Activated B cell treated with CpG ODN at 0.5 μM for 24 hours (primary cell): ENCODE measurements at regions of chr2 and their contacts with region 1.

Region 1: DNA sequence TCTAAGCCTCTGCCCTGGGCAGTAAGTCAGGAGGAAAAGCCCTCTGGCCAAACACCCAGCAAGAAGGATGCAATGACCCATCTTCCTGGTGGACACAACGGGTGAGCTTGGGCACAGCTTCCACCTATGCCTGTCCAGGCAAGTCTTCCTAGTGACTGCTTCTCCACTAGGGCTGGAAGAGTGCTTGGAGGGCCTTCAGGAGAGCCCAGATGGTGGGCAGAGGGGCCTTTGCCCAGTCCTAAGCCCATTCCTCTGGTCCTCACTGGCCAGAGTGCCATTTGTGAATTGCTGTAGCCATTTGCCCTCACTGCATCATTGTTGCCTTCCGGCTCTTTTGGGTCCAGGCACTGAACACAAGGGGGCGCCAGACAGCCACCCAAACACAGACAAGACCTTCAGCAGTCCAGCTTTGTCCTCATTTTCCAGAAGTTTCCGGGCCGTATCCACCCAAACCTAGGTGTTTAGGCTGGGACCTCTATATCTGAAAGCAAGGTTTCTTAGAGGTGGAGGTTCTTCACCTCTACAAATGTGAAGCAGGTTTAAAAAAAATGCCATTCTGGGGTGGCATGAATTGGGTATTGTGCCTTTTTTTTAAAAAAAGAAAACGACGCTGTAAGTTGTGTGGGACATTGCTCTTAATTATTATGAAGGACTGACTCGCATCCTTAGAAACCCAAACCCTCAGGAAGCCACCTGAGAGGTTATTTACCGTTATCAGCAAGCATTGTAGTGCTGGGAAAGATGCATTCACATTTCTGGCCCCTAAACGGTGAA is 29.5 kb downstream of the PAX8 start:
- DNase-seq: peak; percentile 64
- ATAC-seq: peak; percentile 86
- H3K4me3 Mint-ChIP-seq: no peak overlapping the region
- H3K27ac Mint-ChIP-seq: no peak overlapping the region
- H3K4me1 Mint-ChIP-seq: peaks cover 11% of the 10 kb centered on the region
- H3K27me3 Mint-ChIP-seq: peaks cover 2% of the 10 kb centered on the region
- CTCF ChIP-seq: peak; percentile 92

Region 2: DNA sequence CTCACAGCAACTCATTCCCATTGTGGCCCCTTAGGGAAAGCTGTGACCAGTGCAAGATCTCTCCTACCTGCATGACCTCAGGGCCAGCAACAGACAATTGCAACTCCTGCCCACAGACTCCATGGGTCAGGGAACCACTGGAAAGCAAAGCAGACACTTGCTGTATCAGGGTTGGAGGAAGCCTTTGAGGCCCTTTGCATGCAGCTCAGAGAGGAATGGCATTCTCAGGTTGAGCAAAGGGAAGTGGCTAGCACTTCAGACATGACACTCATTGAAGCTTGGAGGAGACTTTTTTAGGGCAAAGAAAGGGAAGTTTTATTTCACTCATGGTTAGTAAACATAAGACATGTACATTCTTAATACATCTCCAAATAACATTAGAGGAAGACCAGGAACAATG is 159.3 kb before region 1 on chr2:
- CTCF ChIA-PET with region 1: no interaction called
- POLR2A ChIA-PET with region 1: no interaction called
- intact Hi-C with region 1: no loop called
- DNase-seq: no peak
- ATAC-seq: no peak
- H3K4me3 Mint-ChIP-seq: no peak overlapping the region
- H3K27ac Mint-ChIP-seq: no peak overlapping the region
- H3K4me1 Mint-ChIP-seq: no peaks in the 10 kb centered on the region
- H3K27me3 Mint-ChIP-seq: peaks cover 8% of the 10 kb centered on the region
- CTCF ChIP-seq: no peak

Region 3: DNA sequence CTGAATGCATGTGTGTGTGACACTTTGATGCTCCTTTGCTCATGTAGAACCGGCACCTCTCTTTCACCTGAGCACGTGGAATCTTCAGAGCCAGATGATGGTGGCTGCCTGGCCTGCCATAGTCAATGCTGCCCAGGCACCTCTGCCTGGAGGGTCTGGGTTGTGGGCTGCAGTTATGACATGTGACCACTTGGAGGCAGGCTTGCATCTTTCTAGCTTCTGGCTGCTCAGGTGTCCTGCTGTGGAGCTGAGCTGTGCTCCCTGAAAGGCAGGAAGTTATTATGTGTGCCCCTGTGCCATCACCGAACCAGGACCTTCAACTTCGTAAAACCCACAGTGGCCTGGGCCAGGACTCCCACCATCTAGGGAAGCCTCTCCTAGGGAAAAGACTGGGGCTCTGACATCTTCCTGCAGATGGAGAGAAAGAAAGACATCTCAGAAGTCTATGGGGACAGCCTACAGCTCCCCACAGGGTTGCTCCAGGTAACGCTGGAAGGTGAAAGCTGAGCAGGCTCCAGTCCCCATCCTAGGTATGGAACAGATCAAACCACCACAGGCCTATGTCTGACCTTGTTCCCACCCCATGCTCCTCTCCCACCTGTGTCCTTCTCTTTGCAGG is 45.2 kb before region 1 on chr2:
- CTCF ChIA-PET with region 1: interaction called, 7 read pairs
- POLR2A ChIA-PET with region 1: no interaction called
- intact Hi-C with region 1: loop called (anchors 1 kb)
- DNase-seq: peak; percentile 54
- ATAC-seq: peak; percentile 78
- H3K4me3 Mint-ChIP-seq: no peak overlapping the region
- H3K27ac Mint-ChIP-seq: peak overlapping the region; percentile 74
- H3K4me1 Mint-ChIP-seq: peaks cover 16% of the 10 kb centered on the region
- H3K27me3 Mint-ChIP-seq: no peaks in the 10 kb centered on the region
- CTCF ChIP-seq: peak; percentile 27

Region 4: GRCh38 chr2:113309655-113310387 is 60.6 kb after region 1 on chr2:
- CTCF ChIA-PET with region 1: no interaction called
- POLR2A ChIA-PET with region 1: no interaction called
- intact Hi-C with region 1: no loop called
- DNase-seq: no peak
- ATAC-seq: no peak
- H3K4me3 Mint-ChIP-seq: no peak overlapping the region
- H3K27ac Mint-ChIP-seq: no peak overlapping the region
- H3K4me1 Mint-ChIP-seq: no peaks in the 10 kb centered on the region
- H3K27me3 Mint-ChIP-seq: peaks cover 12% of the 10 kb centered on the region
- CTCF ChIP-seq: no peak

Region 5: DNA sequence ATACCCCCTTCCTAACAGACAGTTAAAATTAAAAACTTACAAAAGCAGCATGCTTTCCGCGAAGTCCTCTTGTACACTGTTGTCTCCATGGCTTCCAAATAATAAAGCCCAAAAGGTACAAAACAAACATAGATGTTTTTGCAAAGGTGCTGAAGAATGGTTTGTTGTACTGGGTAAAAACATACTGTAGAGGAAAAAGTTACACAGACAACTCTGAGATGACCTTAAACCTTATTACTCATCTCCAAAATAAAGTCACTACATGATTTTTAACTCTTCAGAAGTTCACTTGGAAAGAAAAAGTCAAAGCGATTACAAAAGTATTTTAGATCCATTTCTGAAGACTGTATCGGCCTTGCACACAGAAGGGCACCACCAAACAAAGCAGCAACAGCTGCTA is 501.2 kb after region 1 on chr2:
- CTCF ChIA-PET with region 1: no interaction called
- POLR2A ChIA-PET with region 1: no interaction called
- intact Hi-C with region 1: no loop called
- DNase-seq: no peak
- ATAC-seq: no peak
- H3K4me3 Mint-ChIP-seq: no peak overlapping the region
- H3K27ac Mint-ChIP-seq: no peak overlapping the region
- H3K4me1 Mint-ChIP-seq: peaks cover 26% of the 10 kb centered on the region
- H3K27me3 Mint-ChIP-seq: no peaks in the 10 kb centered on the region
- CTCF ChIP-seq: no peak

Region 6: GRCh38 chr2:114610677-114611076 is 1361.5 kb after region 1 on chr2:
- CTCF ChIA-PET with region 1: no interaction called
- POLR2A ChIA-PET with region 1: no interaction called
- intact Hi-C with region 1: no loop called
- DNase-seq: no peak
- ATAC-seq: no peak
- H3K4me3 Mint-ChIP-seq: no peak overlapping the region
- H3K27ac Mint-ChIP-seq: no peak overlapping the region
- H3K4me1 Mint-ChIP-seq: no peaks in the 10 kb centered on the region
- H3K27me3 Mint-ChIP-seq: no peaks in the 10 kb centered on the region
- CTCF ChIP-seq: no peak